ENCODE measurements at regions of chr19 and their contacts with region 1.

Region 1: GRCh38 chr19:48333467-48334384 is 8.4 kb downstream of the EMP3 start:
- DNase-seq: peak; percentile 90 to 96 (median 93)
- ATAC-seq: peak; percentile 77
- H3K4me3 ChIP-seq: peak overlapping the region; percentile 77
- H3K4me3 Mint-ChIP-seq: peak overlapping the region; percentile 83 to 100 (median 97)
- H3K27ac ChIP-seq: peak overlapping the region; percentile 95
- H3K27ac Mint-ChIP-seq: peak overlapping the region; percentile 93 to 100 (median 97)
- H3K4me1 ChIP-seq: peaks cover 32 to 43% of the 10 kb centered on the region in 2 donors
- H3K4me1 Mint-ChIP-seq: peaks cover 25 to 61% (median 47%) of the 10 kb centered on the region in 7 donors
- H3K27me3 ChIP-seq: no peaks in the 10 kb centered on the region
- H3K27me3 Mint-ChIP-seq: no peaks in the 10 kb centered on the region

Region 2: DNA sequence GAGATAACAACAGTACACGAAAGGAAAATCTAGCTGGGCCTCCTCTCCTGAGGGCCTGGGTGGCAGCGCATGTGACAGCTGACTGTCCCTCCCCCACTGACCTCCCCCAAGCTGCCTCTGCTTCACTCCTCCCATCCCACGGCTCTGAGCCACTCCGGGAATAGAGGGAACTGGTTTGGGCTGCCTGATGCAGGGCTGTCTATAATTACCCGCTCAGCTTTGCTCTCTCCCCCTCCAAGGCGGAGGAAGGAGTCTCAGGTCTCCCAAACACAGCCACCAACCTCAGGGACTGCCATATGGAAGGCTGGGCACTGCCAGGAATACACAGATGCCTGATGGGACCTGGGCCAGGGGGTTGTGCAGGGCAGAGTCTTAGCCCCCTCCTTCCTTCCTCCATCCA is 826.7 kb before region 1 on chr19:
- CTCF ChIA-PET with region 1: no interaction called
- POLR2A ChIA-PET with region 1: no interaction called
- intact Hi-C with region 1: no loop called
- DNase-seq: no peak
- ATAC-seq: no peak
- H3K4me3 ChIP-seq: no peak overlapping the region
- H3K4me3 Mint-ChIP-seq: no peak overlapping the region
- H3K27ac ChIP-seq: no peak overlapping the region
- H3K27ac Mint-ChIP-seq: no peak overlapping the region
- H3K4me1 ChIP-seq: peaks cover 9 to 23% of the 10 kb centered on the region in 2 donors
- H3K4me1 Mint-ChIP-seq: peaks cover 17 to 52% (median 31%) of the 10 kb centered on the region in 7 donors
- H3K27me3 ChIP-seq: no peaks in the 10 kb centered on the region
- H3K27me3 Mint-ChIP-seq: no peaks in the 10 kb centered on the region

Region 3: GRCh38 chr19:48255376-48256303 is 78.1 kb before region 1 on chr19 and contains the start of gene CARD8:
- CTCF ChIA-PET with region 1: interaction called, 3 read pairs
- POLR2A ChIA-PET with region 1: interaction called, 6 read pairs
- intact Hi-C with region 1: loop called in 1 of 2 experiments (anchors 2 kb)
- DNase-seq: peak; percentile 54 to 91 (median 84)
- ATAC-seq: peak; percentile 85
- H3K4me3 ChIP-seq: peak within 1 kb of the TSS; percentile 100
- H3K4me3 Mint-ChIP-seq: peak within 1 kb of the TSS; percentile 74 to 100 (median 99)
- H3K27ac ChIP-seq: peak within 1 kb of the TSS; percentile 88
- H3K27ac Mint-ChIP-seq: peak within 1 kb of the TSS; percentile 90 to 100 (median 97)
- H3K4me1 ChIP-seq: peaks cover 53 to 56% of the 10 kb centered on the region in 2 donors
- H3K4me1 Mint-ChIP-seq: peaks cover 51 to 86% (median 76%) of the 10 kb centered on the region in 7 donors
- H3K27me3 ChIP-seq: no peaks in the 10 kb centered on the region
- H3K27me3 Mint-ChIP-seq: no peaks in the 10 kb centered on the region
- total RNA-seq, gene CARD8: 104 to 301 (median 182) TPM

Region 4: GRCh38 chr19:48308631-48309586 is 24.8 kb before region 1 on chr19:
- CTCF ChIA-PET with region 1: interaction called, 6 read pairs
- POLR2A ChIA-PET with region 1: interaction called, 9 read pairs
- intact Hi-C with region 1: loop called in 1 of 2 experiments (anchors 1 kb)
- DNase-seq: no peak
- ATAC-seq: no peak
- H3K4me3 ChIP-seq: no peak overlapping the region
- H3K4me3 Mint-ChIP-seq: no peak overlapping the region
- H3K27ac ChIP-seq: no peak overlapping the region
- H3K27ac Mint-ChIP-seq: no peak overlapping the region
- H3K4me1 ChIP-seq: no peaks in the 10 kb centered on the region
- H3K4me1 Mint-ChIP-seq: peaks cover 0 to 4% (median 0%) of the 10 kb centered on the region in 7 donors
- H3K27me3 ChIP-seq: no peaks in the 10 kb centered on the region
- H3K27me3 Mint-ChIP-seq: peaks cover 0 to 14% (median 0%) of the 10 kb centered on the region in 5 donors

Region 5: DNA sequence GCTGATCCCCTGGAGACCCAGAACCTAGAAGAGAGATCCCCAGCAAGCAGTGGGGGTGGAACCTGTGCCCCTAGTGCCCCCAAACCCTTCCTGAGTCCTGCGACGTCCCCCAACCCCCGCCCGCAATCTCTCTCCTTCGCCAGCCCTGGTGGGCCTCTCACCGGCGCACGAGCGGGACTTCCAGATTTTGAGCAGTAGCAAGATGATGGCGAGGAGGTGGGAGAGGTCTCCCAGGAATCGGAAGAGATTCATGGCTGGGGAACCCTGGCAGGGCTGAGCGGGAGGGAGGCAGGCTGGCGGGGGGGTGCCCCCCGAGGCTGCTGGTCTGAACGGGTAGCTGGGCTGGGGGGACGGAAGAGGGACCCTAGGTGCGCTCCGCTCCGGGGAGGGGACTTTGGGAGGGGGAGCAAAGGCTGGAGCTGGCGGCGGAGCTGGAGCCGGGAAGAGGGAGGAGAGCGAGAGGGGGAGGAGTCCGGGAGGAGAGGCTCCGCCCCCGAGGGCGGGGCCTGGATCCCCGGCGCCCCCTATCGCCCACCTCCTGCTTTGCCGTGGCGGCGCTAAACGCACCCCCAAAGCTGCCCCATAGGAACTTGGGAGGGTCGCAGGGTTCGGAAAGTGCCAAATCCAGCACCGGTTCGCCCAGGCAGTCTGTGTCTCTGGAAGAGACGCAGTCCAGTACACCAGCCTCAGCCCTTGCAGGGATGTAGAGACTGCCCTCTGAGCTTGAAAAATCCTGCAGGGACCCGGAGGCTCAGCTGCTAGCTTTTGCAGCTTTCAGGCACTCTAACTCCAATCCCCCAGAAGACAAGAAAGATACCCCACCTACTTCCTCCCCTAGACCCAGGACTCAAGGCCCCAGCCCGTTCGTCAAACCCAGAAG is 57.6 kb after region 1 on chr19 and contains the start of gene KDELR1:
- CTCF ChIA-PET with region 1: interaction called, 7 read pairs
- POLR2A ChIA-PET with region 1: interaction called, 7 read pairs
- intact Hi-C with region 1: loop called in 1 of 2 experiments (anchors 2 kb)
- DNase-seq: peak; percentile 55 to 89 (median 72)
- ATAC-seq: peak; percentile 92
- H3K4me3 ChIP-seq: peak within 1 kb of the TSS; percentile 96
- H3K4me3 Mint-ChIP-seq: peak within 1 kb of the TSS; percentile 84 to 95 (median 92)
- H3K27ac ChIP-seq: peak within 1 kb of the TSS; percentile 92
- H3K27ac Mint-ChIP-seq: peak within 1 kb of the TSS; percentile 78 to 97 (median 93)
- H3K4me1 ChIP-seq: peaks cover 15 to 32% of the 10 kb centered on the region in 2 donors
- H3K4me1 Mint-ChIP-seq: peaks cover 5 to 46% (median 36%) of the 10 kb centered on the region in 7 donors
- H3K27me3 ChIP-seq: peaks cover 9 to 21% of the 10 kb centered on the region in 2 donors
- H3K27me3 Mint-ChIP-seq: peaks cover 9 to 42% (median 21%) of the 10 kb centered on the region in 5 donors
- total RNA-seq, gene KDELR1: 42.7 to 73.9 (median 52.3) TPM

Region 6: GRCh38 chr19:48433337-48433736 is 99.6 kb after region 1 on chr19:
- CTCF ChIA-PET with region 1: no interaction called
- POLR2A ChIA-PET with region 1: no interaction called
- intact Hi-C with region 1: no loop called
- DNase-seq: no peak
- ATAC-seq: no peak
- H3K4me3 ChIP-seq: no peak overlapping the region
- H3K4me3 Mint-ChIP-seq: no peak overlapping the region
- H3K27ac ChIP-seq: no peak overlapping the region
- H3K27ac Mint-ChIP-seq: no peak overlapping the region
- H3K4me1 ChIP-seq: no peaks in the 10 kb centered on the region
- H3K4me1 Mint-ChIP-seq: peaks cover 0 to 3% (median 0%) of the 10 kb centered on the region in 7 donors
- H3K27me3 ChIP-seq: no peaks in the 10 kb centered on the region
- H3K27me3 Mint-ChIP-seq: peaks cover 7 to 17% (median 13%) of the 10 kb centered on the region in 5 donors

Region 7: GRCh38 chr19:48461982-48462655 is 128.4 kb after region 1 on chr19:
- CTCF ChIA-PET with region 1: no interaction called
- POLR2A ChIA-PET with region 1: no interaction called
- intact Hi-C with region 1: no loop called
- DNase-seq: no peak
- ATAC-seq: no peak
- H3K4me3 ChIP-seq: no peak overlapping the region
- H3K4me3 Mint-ChIP-seq: no peak overlapping the region
- H3K27ac ChIP-seq: no peak overlapping the region
- H3K27ac Mint-ChIP-seq: no peak overlapping the region
- H3K4me1 ChIP-seq: no peaks in the 10 kb centered on the region
- H3K4me1 Mint-ChIP-seq: peaks cover 0 to 4% (median 0%) of the 10 kb centered on the region in 7 donors
- H3K27me3 ChIP-seq: no peaks in the 10 kb centered on the region
- H3K27me3 Mint-ChIP-seq: no peaks in the 10 kb centered on the region

Region 8: GRCh38 chr19:48513289-48514122 is 179.8 kb after region 1 on chr19:
- CTCF ChIA-PET with region 1: no interaction called
- POLR2A ChIA-PET with region 1: no interaction called
- intact Hi-C with region 1: loop called in 1 of 2 experiments (anchors 1 kb)
- DNase-seq: peak in 8 of 9 donors; percentile 69 to 84 (median 78)
- ATAC-seq: peak; percentile 77
- H3K4me3 ChIP-seq: peak overlapping the region; percentile 72
- H3K4me3 Mint-ChIP-seq: no peak overlapping the region
- H3K27ac ChIP-seq: peak overlapping the region; percentile 82
- H3K27ac Mint-ChIP-seq: peak overlapping the region in 3 of 9 donors; percentile 68 to 91 (median 90)
- H3K4me1 ChIP-seq: peaks cover 21 to 22% of the 10 kb centered on the region in 2 donors
- H3K4me1 Mint-ChIP-seq: peaks cover 11 to 18% (median 13%) of the 10 kb centered on the region in 7 donors
- H3K27me3 ChIP-seq: no peaks in the 10 kb centered on the region
- H3K27me3 Mint-ChIP-seq: no peaks in the 10 kb centered on the region

Region 9: GRCh38 chr19:48720613-48721296 is 387.0 kb after region 1 on chr19:
- CTCF ChIA-PET with region 1: no interaction called
- POLR2A ChIA-PET with region 1: no interaction called
- intact Hi-C with region 1: loop called in 1 of 2 experiments (anchors 5 kb)
- DNase-seq: peak; percentile 77 to 93 (median 89)
- ATAC-seq: peak; percentile 91
- H3K4me3 ChIP-seq: peak overlapping the region; percentile 92
- H3K4me3 Mint-ChIP-seq: peak overlapping the region; percentile 80 to 99 (median 97)
- H3K27ac ChIP-seq: peak overlapping the region; percentile 80
- H3K27ac Mint-ChIP-seq: peak overlapping the region; percentile 98 to 100 (median 99)
- H3K4me1 ChIP-seq: peaks cover 5 to 17% of the 10 kb centered on the region in 2 donors
- H3K4me1 Mint-ChIP-seq: peaks cover 19 to 30% (median 25%) of the 10 kb centered on the region in 7 donors
- H3K27me3 ChIP-seq: no peaks in the 10 kb centered on the region
- H3K27me3 Mint-ChIP-seq: no peaks in the 10 kb centered on the region